Caco-2 (cell line): ENCODE measurements at regions of chr2 and their contacts with region 1.

Region 1: GRCh38 chr2:73268830-73269685 is 15.2 kb downstream of the FBXO41 start:
- DNase-seq: peak; percentile 90
- H3K4me3 ChIP-seq: peak overlapping the region; percentile 93
- H3K4me3 Mint-ChIP-seq: peak overlapping the region; percentile 72
- H3K27ac Mint-ChIP-seq: peak overlapping the region; percentile 14
- H3K4me1 ChIP-seq: peaks cover 12% of the 10 kb centered on the region; the same call in 1 of the 2 replicates
- H3K4me1 Mint-ChIP-seq: peaks cover 21% of the 10 kb centered on the region
- H3K27me3 ChIP-seq: no peaks in the 10 kb centered on the region
- H3K27me3 Mint-ChIP-seq: no peaks in the 10 kb centered on the region
- CTCF ChIP-seq: peak; percentile 12 to 36

Region 2: GRCh38 chr2:73085691-73086360 is 183.2 kb before region 1 on chr2:
- CTCF ChIA-PET with region 1: no interaction called
- POLR2A ChIA-PET with region 1: no interaction called
- intact Hi-C with region 1: loop called (anchors 5 kb)
- DNase-seq: peak; percentile 87 to 89
- H3K4me3 ChIP-seq: no peak overlapping the region
- H3K4me3 Mint-ChIP-seq: no peak overlapping the region
- H3K27ac Mint-ChIP-seq: no peak overlapping the region
- H3K4me1 ChIP-seq: peaks cover 27% of the 10 kb centered on the region
- H3K4me1 Mint-ChIP-seq: peaks cover 24% of the 10 kb centered on the region
- H3K27me3 ChIP-seq: no peaks in the 10 kb centered on the region
- H3K27me3 Mint-ChIP-seq: no peaks in the 10 kb centered on the region
- CTCF ChIP-seq: peak; percentile 93 to 95

Region 3: DNA sequence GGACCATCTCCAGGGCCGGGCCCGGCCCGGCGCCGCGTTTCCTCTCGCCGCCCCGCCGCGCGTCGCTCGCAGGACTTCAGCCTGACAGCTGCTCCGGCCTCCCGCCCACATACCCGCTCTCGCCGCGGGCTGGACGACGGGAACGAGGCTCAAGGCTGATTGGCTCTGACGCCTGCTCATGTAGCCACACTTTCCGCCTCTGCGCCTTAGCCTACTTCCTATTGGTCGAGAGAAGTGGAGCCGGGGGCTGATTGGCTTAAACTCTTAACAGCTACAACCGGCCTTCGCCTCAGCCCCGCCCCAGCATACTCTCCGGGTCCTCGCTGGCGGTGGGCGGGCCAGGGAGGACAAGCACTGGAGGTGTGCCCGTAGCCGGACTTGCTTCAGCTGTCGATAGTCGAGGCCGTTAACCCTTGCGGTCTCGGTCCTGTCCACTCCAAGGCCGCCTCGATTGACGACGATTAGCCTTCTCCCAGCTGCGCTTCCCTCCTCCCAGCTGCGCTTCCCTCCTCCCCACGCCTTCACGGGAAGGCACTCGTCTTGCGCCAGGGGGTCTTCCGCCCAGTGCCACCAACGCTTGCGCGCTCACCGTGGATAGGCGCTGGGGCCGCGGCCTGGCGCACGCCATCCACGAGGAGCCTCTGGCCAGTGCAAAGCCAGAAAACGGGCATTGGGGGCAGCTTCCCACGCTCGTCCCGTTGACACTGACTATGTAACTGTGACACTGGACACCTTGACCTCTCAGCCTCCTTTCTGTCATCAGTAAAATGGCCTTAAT is 35.7 kb before region 1 on chr2 and contains the start of gene PRADC1:
- CTCF ChIA-PET with region 1: interaction called, 16 read pairs
- POLR2A ChIA-PET with region 1: interaction called, 15 read pairs
- intact Hi-C with region 1: no loop called
- DNase-seq: peak; percentile 99 to 100
- H3K4me3 ChIP-seq: peak within 1 kb of the TSS; percentile 78
- H3K4me3 Mint-ChIP-seq: peak within 1 kb of the TSS; percentile 91
- H3K27ac Mint-ChIP-seq: peak within 1 kb of the TSS; percentile 98
- H3K4me1 ChIP-seq: peaks cover 7% of the 10 kb centered on the region; the same call in 1 of the 2 replicates
- H3K4me1 Mint-ChIP-seq: peaks cover 20% of the 10 kb centered on the region
- H3K27me3 ChIP-seq: no peaks in the 10 kb centered on the region
- H3K27me3 Mint-ChIP-seq: no peaks in the 10 kb centered on the region
- CTCF ChIP-seq: no peak
- total RNA-seq, gene PRADC1: 24.1 and 25.4 TPM in 2 replicates

Region 4: GRCh38 chr2:73284296-73285158 is 15.5 kb after region 1 on chr2 and contains the start of gene FBXO41:
- CTCF ChIA-PET with region 1: interaction called, 5 read pairs
- POLR2A ChIA-PET with region 1: interaction called, 3 read pairs
- intact Hi-C with region 1: loop called (anchors 1 kb)
- DNase-seq: peak; percentile 58 to 59
- H3K4me3 ChIP-seq: peak within 1 kb of the TSS; percentile 84
- H3K4me3 Mint-ChIP-seq: peak within 1 kb of the TSS; percentile 65
- H3K27ac Mint-ChIP-seq: no peak within 1 kb of the TSS
- H3K4me1 ChIP-seq: peaks cover 5% of the 10 kb centered on the region; the same call in 1 of the 2 replicates
- H3K4me1 Mint-ChIP-seq: no peaks in the 10 kb centered on the region
- H3K27me3 ChIP-seq: no peaks in the 10 kb centered on the region
- H3K27me3 Mint-ChIP-seq: peaks cover 2% of the 10 kb centered on the region
- CTCF ChIP-seq: no peak
- total RNA-seq, gene FBXO41: 11.6 and 12.1 TPM in 2 replicates